IMR-90 (cell line): ENCODE measurements at regions of chr9 and their contacts with region 1.

Region 1: GRCh38 chr9:128947422-128948301 is at the starts of genes DOLK and NUP188:
- DNase-seq: peak; percentile 89
- ATAC-seq: peak; percentile 84
- H3K4me3 ChIP-seq: peak within 1 kb of the TSS; percentile 94
- H3K27ac ChIP-seq: peak within 1 kb of the TSS; percentile 88
- H3K4me1 ChIP-seq: peaks cover 7% of the 10 kb centered on the region
- H3K27me3 ChIP-seq: no peaks in the 10 kb centered on the region
- CTCF ChIP-seq: no peak
- POLR2A ChIP-seq: peak; percentile 94
- RAD21 ChIP-seq: no peak
- total RNA-seq, gene DOLK: 26.4 and 30.8 TPM in 2 replicates
- total RNA-seq, gene NUP188: 52.5 and 59.1 TPM in 2 replicates

Region 2: DNA sequence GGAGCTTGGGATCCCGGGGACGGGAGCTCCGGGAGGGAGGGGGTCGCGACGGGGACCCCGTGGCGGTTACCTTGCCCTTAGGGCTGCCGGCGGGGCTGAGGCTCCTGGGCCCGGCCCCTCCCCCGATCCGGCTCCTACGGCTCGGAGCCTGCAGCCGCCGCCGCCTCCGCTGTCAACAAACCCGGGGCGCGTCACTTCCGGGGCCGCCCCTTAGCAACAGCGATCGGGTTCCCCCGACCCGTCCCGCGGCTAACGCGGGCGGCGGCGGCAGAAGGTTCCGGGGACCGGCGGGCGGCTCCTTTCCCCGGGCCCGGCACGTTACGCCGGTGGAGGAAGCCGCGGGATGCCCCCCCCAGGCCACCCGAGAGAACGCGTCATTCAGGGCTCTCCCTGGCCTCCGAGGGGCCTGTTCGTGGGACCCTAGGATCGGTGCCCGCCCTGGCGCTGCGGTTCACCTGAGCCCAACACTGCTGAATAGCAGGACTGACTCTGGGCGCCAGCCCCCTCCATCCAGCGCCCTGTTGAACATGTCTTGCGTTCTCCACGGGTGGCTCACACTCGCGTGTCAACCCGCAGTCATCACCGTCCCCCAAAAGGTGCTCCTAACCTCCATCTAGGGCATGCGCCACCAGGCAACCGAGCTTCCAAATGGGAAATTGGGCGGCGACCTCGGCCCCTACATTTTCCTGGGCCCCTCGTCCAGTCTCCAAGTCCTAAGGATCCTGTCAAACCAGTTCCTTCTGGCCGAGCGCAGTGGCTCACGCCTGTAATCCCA is 175.7 kb before region 1 on chr9 and contains the start of gene ZER1:
- CTCF ChIA-PET with region 1: no interaction called
- POLR2A ChIA-PET with region 1: no interaction called
- dilution Hi-C with region 1: no loop called
- in situ Hi-C with region 1: no loop called
- intact Hi-C with region 1: loop called (anchors 1 kb)
- DNase-seq: peak; percentile 83
- ATAC-seq: peak; percentile 96
- H3K4me3 ChIP-seq: peak within 1 kb of the TSS; percentile 99
- H3K27ac ChIP-seq: peak within 1 kb of the TSS; percentile 95
- H3K4me1 ChIP-seq: peaks cover 5% of the 10 kb centered on the region
- H3K27me3 ChIP-seq: no peaks in the 10 kb centered on the region
- CTCF ChIP-seq: no peak
- POLR2A ChIP-seq: peak; percentile 15; the same call in 1 of the 2 replicates
- RAD21 ChIP-seq: no peak
- total RNA-seq, gene ZER1: 7.5 and 7.7 TPM in 2 replicates

Region 3: DNA sequence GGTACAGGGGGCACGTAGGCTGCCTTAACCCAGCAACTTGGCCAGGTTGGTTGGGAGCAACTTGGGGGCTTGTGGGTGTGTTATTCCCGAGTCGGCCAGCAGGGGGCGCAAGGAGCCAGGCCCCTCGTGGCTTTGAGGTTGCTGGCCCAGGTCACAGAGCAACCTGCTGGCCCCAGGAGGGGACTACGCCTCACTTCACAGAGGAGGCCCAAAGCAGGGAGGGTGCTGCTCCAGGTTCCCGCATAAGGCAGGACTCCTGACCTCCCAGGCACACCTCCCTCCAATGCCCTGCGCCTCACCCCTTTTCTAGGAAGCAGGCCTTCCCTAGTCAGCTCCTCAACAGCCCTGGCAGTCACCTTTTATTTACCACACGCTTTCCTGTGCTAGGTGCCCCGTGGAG is 84.0 kb before region 1 on chr9:
- CTCF ChIA-PET with region 1: no interaction called
- POLR2A ChIA-PET with region 1: no interaction called
- dilution Hi-C with region 1: no loop called
- in situ Hi-C with region 1: no loop called
- intact Hi-C with region 1: loop called (anchors 5 kb)
- DNase-seq: peak; percentile 36
- ATAC-seq: peak; percentile 96
- H3K4me3 ChIP-seq: no peak overlapping the region
- H3K27ac ChIP-seq: no peak overlapping the region
- H3K4me1 ChIP-seq: no peaks in the 10 kb centered on the region
- H3K27me3 ChIP-seq: no peaks in the 10 kb centered on the region
- CTCF ChIP-seq: peak; percentile 82
- POLR2A ChIP-seq: no peak
- RAD21 ChIP-seq: peak; percentile 83

Region 4: GRCh38 chr9:128881901-128882681 is 65.6 kb before region 1 on chr9 and contains the starts of genes KYAT1 and LRRC8A:
- CTCF ChIA-PET with region 1: interaction called, 4 read pairs
- POLR2A ChIA-PET with region 1: no interaction called
- dilution Hi-C with region 1: no loop called
- in situ Hi-C with region 1: no loop called
- intact Hi-C with region 1: loop called (anchors 5 kb)
- DNase-seq: peak; percentile 93
- ATAC-seq: peak; percentile 88
- H3K4me3 ChIP-seq: peak within 1 kb of the TSS; percentile 78
- H3K27ac ChIP-seq: peak within 1 kb of the TSS; percentile 91
- H3K4me1 ChIP-seq: peaks cover 8% of the 10 kb centered on the region
- H3K27me3 ChIP-seq: no peaks in the 10 kb centered on the region
- CTCF ChIP-seq: 0 out of 2 replicates have a peak, but pooled peaks have one; percentile 17
- POLR2A ChIP-seq: peak; percentile 95
- RAD21 ChIP-seq: no peak
- total RNA-seq, gene KYAT1: 5.8 and 6.8 TPM in 2 replicates
- total RNA-seq, gene LRRC8A: 42.8 and 45.8 TPM in 2 replicates

Region 5: DNA sequence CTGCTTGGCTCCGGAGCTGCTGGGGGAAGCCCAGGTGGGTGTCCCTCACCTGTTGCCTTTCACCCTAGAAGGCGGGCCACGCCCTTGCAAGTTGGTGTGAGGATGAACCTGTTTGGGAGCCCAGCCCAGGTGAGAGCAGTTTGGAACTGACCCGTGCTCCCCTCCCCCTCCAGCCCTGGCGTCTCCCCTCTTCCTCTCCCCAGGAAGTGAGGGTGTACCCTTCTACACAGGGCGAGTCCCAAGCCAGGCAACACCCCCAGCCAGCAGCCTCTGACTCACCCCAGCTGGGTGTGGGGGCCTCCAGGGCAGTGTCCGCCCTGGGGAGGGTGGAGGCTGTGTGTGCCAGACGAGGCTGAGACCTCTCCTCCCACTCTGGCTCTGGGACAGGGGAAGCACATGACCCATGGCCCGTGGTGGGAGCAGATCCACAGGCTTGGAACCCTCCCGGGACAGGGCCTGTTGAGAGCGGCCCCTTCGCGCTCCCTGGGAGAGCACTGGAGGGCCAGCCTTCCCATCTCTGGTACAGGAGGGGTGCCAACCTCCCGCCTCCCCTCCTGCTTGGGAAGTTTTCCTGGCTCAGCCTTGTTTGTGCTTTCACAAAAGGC is 55.2 kb before region 1 on chr9:
- CTCF ChIA-PET with region 1: no interaction called
- POLR2A ChIA-PET with region 1: no interaction called
- dilution Hi-C with region 1: no loop called
- in situ Hi-C with region 1: no loop called
- intact Hi-C with region 1: no loop called
- DNase-seq: peak; percentile 81
- ATAC-seq: peak; percentile 91
- H3K4me3 ChIP-seq: no peak overlapping the region
- H3K27ac ChIP-seq: peak overlapping the region; percentile 91
- H3K4me1 ChIP-seq: peaks cover 33% of the 10 kb centered on the region
- H3K27me3 ChIP-seq: no peaks in the 10 kb centered on the region
- CTCF ChIP-seq: no peak
- POLR2A ChIP-seq: no peak
- RAD21 ChIP-seq: no peak

Region 6: GRCh38 chr9:128969491-128969890 is 21.8 kb after region 1 on chr9:
- CTCF ChIA-PET with region 1: no interaction called
- POLR2A ChIA-PET with region 1: no interaction called
- dilution Hi-C with region 1: no loop called
- in situ Hi-C with region 1: no loop called
- intact Hi-C with region 1: no loop called
- DNase-seq: peak; percentile 48
- ATAC-seq: peak; percentile 61
- H3K4me3 ChIP-seq: no peak overlapping the region
- H3K27ac ChIP-seq: no peak overlapping the region
- H3K4me1 ChIP-seq: peaks cover 5% of the 10 kb centered on the region
- H3K27me3 ChIP-seq: no peaks in the 10 kb centered on the region
- CTCF ChIP-seq: no peak
- POLR2A ChIP-seq: no peak
- RAD21 ChIP-seq: no peak

Region 7: GRCh38 chr9:128992995-128993394 is 45.3 kb after region 1 on chr9:
- CTCF ChIA-PET with region 1: no interaction called
- POLR2A ChIA-PET with region 1: no interaction called
- dilution Hi-C with region 1: no loop called
- in situ Hi-C with region 1: no loop called
- intact Hi-C with region 1: no loop called
- DNase-seq: no peak
- ATAC-seq: peak; percentile 65; the same call in 1 of the 2 replicates
- H3K4me3 ChIP-seq: no peak overlapping the region
- H3K27ac ChIP-seq: no peak overlapping the region
- H3K4me1 ChIP-seq: peaks cover under 1% of the 10 kb centered on the region; the same call in 1 of the 2 replicates
- H3K27me3 ChIP-seq: no peaks in the 10 kb centered on the region
- CTCF ChIP-seq: 0 out of 2 replicates have a peak, but pooled peaks have one; percentile 8
- POLR2A ChIP-seq: no peak
- RAD21 ChIP-seq: no peak

Region 8: DNA sequence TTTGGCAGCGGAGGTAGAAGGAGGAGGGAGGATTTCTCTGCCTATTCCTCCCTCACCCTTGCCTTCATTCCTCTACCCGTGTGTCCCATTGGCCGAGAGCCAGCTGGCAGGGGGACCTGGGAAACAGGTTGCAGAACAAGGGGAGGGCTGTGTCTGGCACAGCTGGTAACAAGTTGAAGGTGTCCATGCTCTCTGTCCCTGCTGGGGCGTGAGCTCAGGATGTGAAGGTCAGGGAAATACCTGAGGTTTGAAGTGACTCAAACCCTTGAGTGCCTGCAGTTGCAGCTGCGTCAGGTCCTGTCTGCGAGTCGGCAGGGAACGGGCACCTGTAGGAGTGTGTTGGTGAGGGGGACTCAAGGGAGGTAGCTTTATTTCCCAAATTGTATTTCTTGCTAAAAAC is 104.9 kb after region 1 on chr9:
- CTCF ChIA-PET with region 1: no interaction called
- POLR2A ChIA-PET with region 1: no interaction called
- dilution Hi-C with region 1: no loop called
- in situ Hi-C with region 1: no loop called
- intact Hi-C with region 1: no loop called
- DNase-seq: no peak
- ATAC-seq: no peak
- H3K4me3 ChIP-seq: no peak overlapping the region
- H3K27ac ChIP-seq: no peak overlapping the region
- H3K4me1 ChIP-seq: no peaks in the 10 kb centered on the region
- H3K27me3 ChIP-seq: no peaks in the 10 kb centered on the region
- CTCF ChIP-seq: no peak
- POLR2A ChIP-seq: no peak
- RAD21 ChIP-seq: no peak